CD8-positive, alpha-beta memory T cell (primary cell): ENCODE measurements at regions of chr6 and their contacts with region 1.

Region 1: DNA sequence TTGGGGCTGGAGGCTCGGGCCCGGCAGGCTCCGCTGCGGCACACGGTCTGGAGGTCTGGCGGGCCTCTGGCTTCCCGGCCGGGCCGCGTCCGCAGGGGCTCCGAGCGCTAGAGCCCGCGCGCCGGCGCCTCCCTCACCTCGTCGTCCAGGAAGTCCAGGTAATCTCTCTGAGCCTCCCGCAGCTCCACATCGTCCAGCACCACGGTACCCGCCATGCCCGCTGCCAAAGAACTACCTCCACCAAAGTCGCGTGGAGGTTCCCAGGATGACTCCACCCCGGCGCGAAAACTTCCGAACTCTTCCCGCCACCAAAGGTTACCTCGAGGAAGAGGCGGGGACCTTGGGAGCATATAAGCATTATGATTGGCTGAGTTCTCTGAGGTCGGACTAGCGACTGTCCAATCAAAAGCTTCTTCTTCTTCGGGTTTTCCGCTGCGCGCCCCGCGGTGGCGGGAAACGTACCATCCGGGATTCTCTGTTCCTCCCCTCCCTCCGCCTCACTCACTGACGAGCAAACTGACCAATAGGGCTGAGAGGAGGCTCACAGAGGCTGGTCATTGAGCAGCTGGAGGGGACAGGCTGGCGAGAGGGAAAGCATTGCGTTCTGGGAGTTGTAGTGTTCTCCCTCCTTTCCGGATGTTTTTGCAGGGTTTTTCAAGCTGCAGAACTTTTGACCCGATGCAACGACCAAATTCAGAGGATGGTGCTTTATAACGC is at the start of gene MCM3:
- DNase-seq: peak; percentile 91 to 98 (median 98)
- H3K4me3 ChIP-seq: peak within 1 kb of the TSS; percentile 85
- H3K4me3 Mint-ChIP-seq: peak within 1 kb of the TSS in 3 of 7 donors; percentile 56 to 65 (median 63)
- H3K27ac ChIP-seq: peak within 1 kb of the TSS; percentile 71
- H3K27ac Mint-ChIP-seq: peak within 1 kb of the TSS in 6 of 8 donors; percentile 21 to 84 (median 60)
- H3K4me1 ChIP-seq: peaks cover 43% of the 10 kb centered on the region
- H3K4me1 Mint-ChIP-seq: peaks cover 25 to 54% (median 39%) of the 10 kb centered on the region in 3 donors
- H3K27me3 ChIP-seq: no peaks in the 10 kb centered on the region
- H3K27me3 Mint-ChIP-seq: no peaks in the 10 kb centered on the region
- total RNA-seq, gene MCM3: 262 to 263 TPM

Region 2: GRCh38 chr6:52263709-52264540 is 20.7 kb before region 1 on chr6:
- CTCF ChIA-PET with region 1: interaction called, 22 read pairs
- POLR2A ChIA-PET with region 1: no interaction called
- DNase-seq: peak; percentile 45 to 78 (median 55)
- H3K4me3 ChIP-seq: no peak overlapping the region
- H3K4me3 Mint-ChIP-seq: no peak overlapping the region
- H3K27ac ChIP-seq: no peak overlapping the region
- H3K27ac Mint-ChIP-seq: peak overlapping the region in 5 of 8 donors; percentile 4 to 58 (median 20)
- H3K4me1 ChIP-seq: no peaks in the 10 kb centered on the region
- H3K4me1 Mint-ChIP-seq: peaks cover 6 to 10% (median 8%) of the 10 kb centered on the region in 3 donors
- H3K27me3 ChIP-seq: no peaks in the 10 kb centered on the region
- H3K27me3 Mint-ChIP-seq: no peaks in the 10 kb centered on the region

Region 3: GRCh38 chr6:52304983-52305390 is 20.4 kb after region 1 on chr6:
- CTCF ChIA-PET with region 1: interaction called, 31 read pairs
- POLR2A ChIA-PET with region 1: interaction called, 8 read pairs
- DNase-seq: no peak
- H3K4me3 ChIP-seq: peak overlapping the region; percentile 4
- H3K4me3 Mint-ChIP-seq: peak overlapping the region; percentile 21 to 83 (median 75)
- H3K27ac ChIP-seq: peak overlapping the region; percentile 55
- H3K27ac Mint-ChIP-seq: peak overlapping the region; percentile 89 to 97 (median 92)
- H3K4me1 ChIP-seq: peaks cover 68% of the 10 kb centered on the region
- H3K4me1 Mint-ChIP-seq: peaks cover 58 to 70% (median 67%) of the 10 kb centered on the region in 3 donors
- H3K27me3 ChIP-seq: no peaks in the 10 kb centered on the region
- H3K27me3 Mint-ChIP-seq: no peaks in the 10 kb centered on the region

Region 4: DNA sequence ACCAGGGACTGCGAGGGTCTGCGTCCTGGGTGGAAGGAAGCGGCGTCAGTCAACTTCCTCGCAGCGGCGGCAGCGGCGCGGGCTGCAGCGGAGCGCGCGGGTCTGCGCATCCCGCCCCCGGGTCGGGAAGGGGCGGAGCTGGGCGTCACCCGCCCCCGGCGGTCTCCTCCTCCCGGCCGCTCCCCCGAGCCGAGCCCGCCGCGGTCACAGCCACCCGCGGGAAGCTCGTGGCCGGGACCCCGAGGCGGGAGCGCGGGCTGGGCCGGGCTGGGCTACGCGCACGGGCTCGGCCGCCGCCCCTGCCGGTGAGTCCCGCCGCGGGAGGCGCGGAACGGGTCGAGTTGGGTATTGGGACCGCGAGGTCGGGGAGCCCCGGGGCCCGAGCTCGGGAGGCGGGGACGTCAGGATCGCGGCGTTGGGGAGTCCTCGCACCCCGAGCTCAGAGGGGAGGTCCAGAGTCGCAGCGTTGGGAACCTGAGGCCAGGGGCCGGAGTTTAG is 77.4 kb after region 1 on chr6 and contains the start of gene PAQR8:
- CTCF ChIA-PET with region 1: interaction called, 57 read pairs
- POLR2A ChIA-PET with region 1: interaction called, 48 read pairs
- DNase-seq: peak; percentile 74 to 89 (median 84)
- H3K4me3 ChIP-seq: peak within 1 kb of the TSS; percentile 94
- H3K4me3 Mint-ChIP-seq: peak within 1 kb of the TSS; percentile 92 to 100 (median 99)
- H3K27ac ChIP-seq: peak within 1 kb of the TSS; percentile 95
- H3K27ac Mint-ChIP-seq: peak within 1 kb of the TSS; percentile 89 to 100 (median 96)
- H3K4me1 ChIP-seq: peaks cover 35% of the 10 kb centered on the region
- H3K4me1 Mint-ChIP-seq: peaks cover 35 to 52% (median 50%) of the 10 kb centered on the region in 3 donors
- H3K27me3 ChIP-seq: no peaks in the 10 kb centered on the region
- H3K27me3 Mint-ChIP-seq: no peaks in the 10 kb centered on the region
- total RNA-seq, gene PAQR8: 10.2 to 11.7 TPM

Region 5: DNA sequence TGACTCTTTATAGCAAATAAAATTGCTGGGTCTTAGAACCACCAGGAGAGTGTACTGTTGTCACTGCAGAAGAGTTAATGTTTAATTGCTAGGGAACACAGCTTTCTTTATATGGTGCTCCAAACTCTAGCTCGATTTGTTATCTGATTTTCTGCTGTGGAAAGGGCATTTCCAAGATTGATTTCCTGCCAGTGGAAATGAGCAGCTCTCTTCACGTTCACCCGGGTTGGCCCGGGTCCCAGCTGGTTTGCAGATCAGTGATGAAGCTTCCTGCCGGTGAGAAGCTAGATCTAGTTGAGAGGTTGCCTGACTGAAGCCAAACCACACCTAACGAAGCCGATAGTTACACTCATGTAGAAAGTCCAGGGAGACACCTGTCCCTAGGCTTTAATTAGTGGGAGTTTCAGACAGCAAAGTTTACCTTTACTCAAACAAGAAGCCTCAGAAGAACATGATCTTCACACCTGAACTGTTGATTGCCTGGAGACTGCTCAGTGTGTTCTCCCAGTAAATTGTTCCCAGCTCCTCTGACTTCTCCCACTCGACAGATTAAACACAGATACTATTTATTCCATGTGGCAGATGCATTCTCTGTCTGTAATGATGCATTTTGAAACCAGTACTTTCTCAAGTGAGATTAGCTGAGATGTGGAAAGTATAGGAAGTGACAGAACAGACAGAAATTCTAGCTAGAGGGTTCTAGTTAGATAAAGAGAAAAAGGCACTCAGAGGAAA is 105.2 kb after region 1 on chr6:
- CTCF ChIA-PET with region 1: interaction called, 41 read pairs
- POLR2A ChIA-PET with region 1: interaction called, 15 read pairs
- DNase-seq: peak; percentile 28 to 75 (median 60)
- H3K4me3 ChIP-seq: peak overlapping the region; percentile 33
- H3K4me3 Mint-ChIP-seq: peak overlapping the region; percentile 70 to 86 (median 80)
- H3K27ac ChIP-seq: peak overlapping the region; percentile 55
- H3K27ac Mint-ChIP-seq: peak overlapping the region; percentile 89 to 98 (median 95)
- H3K4me1 ChIP-seq: peaks cover 66% of the 10 kb centered on the region
- H3K4me1 Mint-ChIP-seq: peaks cover 71 to 93% (median 83%) of the 10 kb centered on the region in 3 donors
- H3K27me3 ChIP-seq: no peaks in the 10 kb centered on the region
- H3K27me3 Mint-ChIP-seq: no peaks in the 10 kb centered on the region

Region 6: DNA sequence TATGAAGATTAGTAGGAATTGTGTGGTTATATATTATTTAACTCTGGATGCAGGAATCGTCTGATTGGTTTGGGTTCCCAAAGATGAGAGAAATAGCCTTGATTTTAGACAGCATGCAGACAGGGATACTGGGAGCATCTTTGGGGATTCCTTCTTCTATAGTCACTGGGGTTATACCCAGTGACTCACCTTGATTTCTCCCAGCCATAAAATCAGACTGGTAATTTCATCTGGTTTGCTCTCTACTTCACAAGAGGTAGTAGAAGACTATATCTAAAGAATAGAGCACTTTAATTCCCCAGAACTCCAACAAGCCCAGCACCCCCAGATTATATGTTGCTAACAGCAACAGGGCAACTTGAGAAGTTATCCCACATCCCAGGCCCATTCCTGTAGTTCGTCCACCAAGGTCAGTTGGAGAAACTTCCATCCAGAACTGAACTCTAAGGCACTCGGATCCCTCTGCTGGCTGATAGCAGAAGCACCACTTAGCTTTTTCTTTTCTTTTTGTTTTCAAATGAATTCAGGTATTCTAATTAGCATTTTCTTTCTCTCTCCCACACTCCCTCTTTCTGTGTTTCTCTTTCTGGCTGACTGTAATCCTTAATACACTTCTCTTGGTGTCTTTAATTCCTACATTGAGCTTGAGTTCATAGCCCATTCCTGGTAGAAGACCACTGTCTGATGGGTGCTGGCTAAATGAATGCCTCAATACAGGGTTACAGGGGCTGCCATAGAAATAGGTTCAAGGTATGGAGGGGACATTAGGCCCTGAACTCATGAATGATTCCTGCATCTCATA is 115.1 kb after region 1 on chr6:
- CTCF ChIA-PET with region 1: interaction called, 138 read pairs
- POLR2A ChIA-PET with region 1: interaction called, 20 read pairs
- DNase-seq: peak in 2 of 5 donors; percentile 30 to 61
- H3K4me3 ChIP-seq: peak overlapping the region; percentile 6
- H3K4me3 Mint-ChIP-seq: peak overlapping the region in 5 of 7 donors; percentile 27 to 79 (median 54)
- H3K27ac ChIP-seq: no peak overlapping the region
- H3K27ac Mint-ChIP-seq: peak overlapping the region; percentile 87 to 98 (median 92)
- H3K4me1 ChIP-seq: peaks cover 68% of the 10 kb centered on the region
- H3K4me1 Mint-ChIP-seq: peaks cover 58 to 74% (median 63%) of the 10 kb centered on the region in 3 donors
- H3K27me3 ChIP-seq: no peaks in the 10 kb centered on the region
- H3K27me3 Mint-ChIP-seq: no peaks in the 10 kb centered on the region

Region 7: GRCh38 chr6:52664186-52664990 is 379.8 kb after region 1 on chr6:
- CTCF ChIA-PET with region 1: interaction called, 19 read pairs
- POLR2A ChIA-PET with region 1: no interaction called
- DNase-seq: peak in 4 of 5 donors; percentile 21 to 56 (median 30)
- H3K4me3 ChIP-seq: peak overlapping the region; percentile 72
- H3K4me3 Mint-ChIP-seq: no peak overlapping the region
- H3K27ac ChIP-seq: no peak overlapping the region
- H3K27ac Mint-ChIP-seq: no peak overlapping the region
- H3K4me1 ChIP-seq: peaks cover 4% of the 10 kb centered on the region
- H3K4me1 Mint-ChIP-seq: peaks cover 0 to 3% (median 0%) of the 10 kb centered on the region in 3 donors
- H3K27me3 ChIP-seq: no peaks in the 10 kb centered on the region
- H3K27me3 Mint-ChIP-seq: no peaks in the 10 kb centered on the region